ENCODE measurements at regions of chr7 and their contacts with region 1.

Region 1: DNA sequence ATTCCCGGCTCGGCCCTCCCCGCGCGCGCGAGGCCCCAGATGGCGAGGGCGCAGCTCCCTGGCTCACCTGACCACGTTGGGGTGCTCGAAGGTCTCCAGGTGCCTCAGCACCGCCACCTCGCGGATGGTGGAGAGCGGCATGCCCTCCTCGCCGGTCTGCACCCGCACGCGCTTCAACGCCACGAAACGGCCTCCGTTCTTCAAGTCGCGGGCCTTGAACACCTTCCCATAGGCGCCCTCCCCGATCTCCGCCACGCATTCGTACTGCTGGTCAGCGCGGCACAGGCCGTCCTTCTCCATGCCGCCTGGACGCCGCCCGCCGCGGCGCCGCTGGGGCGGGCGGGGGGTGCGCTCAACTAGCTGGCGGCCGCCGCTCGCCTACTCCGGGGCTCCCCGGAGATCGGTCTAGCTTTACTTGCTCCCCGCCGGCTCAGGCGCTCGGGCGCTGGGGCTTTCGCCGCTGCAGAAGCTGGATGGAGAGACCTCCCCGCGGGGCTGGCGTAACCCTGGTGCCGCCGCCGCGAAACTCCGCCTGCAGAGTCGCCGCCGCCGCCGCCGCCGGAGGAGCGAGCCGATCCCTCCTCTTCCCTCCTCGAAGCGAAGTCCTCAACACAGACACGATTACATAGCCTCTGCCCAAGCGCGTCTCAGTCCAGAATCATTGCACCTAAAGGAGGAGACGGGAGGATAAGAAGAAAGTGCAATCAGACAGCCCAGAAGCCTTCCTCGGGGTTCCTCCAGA is 3.2 kb downstream of the CDK6 start:
- DNase-seq: peak; percentile 97
- H3K4me3 Mint-ChIP-seq: peak overlapping the region; percentile 99
- H3K27ac Mint-ChIP-seq: peak overlapping the region; percentile 100
- H3K4me1 Mint-ChIP-seq: peaks cover 40% of the 10 kb centered on the region
- H3K27me3 Mint-ChIP-seq: peaks cover 6% of the 10 kb centered on the region

Region 2: DNA sequence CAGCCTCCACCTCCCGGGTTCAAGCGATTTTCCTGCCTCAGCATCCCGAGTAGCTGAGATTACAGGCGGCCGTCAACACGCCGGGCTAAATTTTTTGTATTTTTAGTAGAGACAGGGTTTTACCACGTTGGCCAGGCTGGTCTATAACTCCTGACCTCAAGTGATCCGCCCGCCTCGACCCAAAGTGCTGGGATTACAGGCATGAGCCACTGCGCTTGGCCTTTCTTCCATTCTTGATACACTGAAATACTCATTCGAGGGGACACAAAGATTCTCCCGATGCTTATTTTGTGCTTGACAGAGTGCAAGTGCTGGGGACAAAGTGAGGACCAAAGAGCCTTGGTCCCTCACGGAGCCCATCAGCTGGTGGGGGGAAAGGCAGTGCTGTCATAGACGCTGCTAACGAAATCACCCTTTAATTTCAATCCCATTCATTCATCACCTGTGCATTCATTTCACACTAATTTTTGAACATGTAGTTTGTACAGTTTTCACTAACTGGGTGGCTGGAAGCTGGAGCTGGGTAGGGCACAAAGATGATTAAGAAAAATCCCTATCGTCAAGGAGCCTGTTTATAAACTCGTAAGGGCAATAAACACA is 242.4 kb before region 1 on chr7:
- intact Hi-C with region 1: loop called (anchors 1 kb)
- DNase-seq: no peak
- H3K4me3 Mint-ChIP-seq: peak overlapping the region; percentile 97
- H3K27ac Mint-ChIP-seq: peak overlapping the region; percentile 30
- H3K4me1 Mint-ChIP-seq: peaks cover 35% of the 10 kb centered on the region
- H3K27me3 Mint-ChIP-seq: no peaks in the 10 kb centered on the region

Region 3: GRCh38 chr7:92691578-92691977 is 141.6 kb before region 1 on chr7:
- intact Hi-C with region 1: loop called (anchors 1 kb)
- DNase-seq: peak; percentile 83
- H3K4me3 Mint-ChIP-seq: peak overlapping the region; percentile 56
- H3K27ac Mint-ChIP-seq: peak overlapping the region; percentile 87
- H3K4me1 Mint-ChIP-seq: peaks cover 68% of the 10 kb centered on the region
- H3K27me3 Mint-ChIP-seq: no peaks in the 10 kb centered on the region

Region 4: DNA sequence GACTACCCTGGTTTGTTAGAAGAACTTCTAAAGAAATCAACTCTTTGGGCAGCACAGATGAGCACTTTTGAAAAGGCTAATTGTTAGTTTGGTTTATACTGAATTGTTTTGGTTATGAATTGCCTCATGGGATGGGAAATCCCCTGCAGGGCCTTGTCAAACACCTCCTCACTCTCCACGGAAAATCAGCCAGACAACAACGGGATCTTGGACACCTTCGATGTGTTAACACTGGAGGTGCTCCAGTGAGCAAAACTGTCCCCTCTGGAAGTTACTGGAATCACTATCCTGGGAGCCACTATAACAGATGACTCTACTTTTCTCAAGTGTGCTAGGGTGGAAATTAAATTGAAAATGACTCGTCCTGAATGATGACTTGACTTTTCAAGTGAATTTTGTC is 35.5 kb before region 1 on chr7:
- intact Hi-C with region 1: loop called (anchors 1 kb)
- DNase-seq: peak; percentile 72
- H3K4me3 Mint-ChIP-seq: no peak overlapping the region
- H3K27ac Mint-ChIP-seq: no peak overlapping the region
- H3K4me1 Mint-ChIP-seq: peaks cover 42% of the 10 kb centered on the region
- H3K27me3 Mint-ChIP-seq: no peaks in the 10 kb centered on the region

Region 5: DNA sequence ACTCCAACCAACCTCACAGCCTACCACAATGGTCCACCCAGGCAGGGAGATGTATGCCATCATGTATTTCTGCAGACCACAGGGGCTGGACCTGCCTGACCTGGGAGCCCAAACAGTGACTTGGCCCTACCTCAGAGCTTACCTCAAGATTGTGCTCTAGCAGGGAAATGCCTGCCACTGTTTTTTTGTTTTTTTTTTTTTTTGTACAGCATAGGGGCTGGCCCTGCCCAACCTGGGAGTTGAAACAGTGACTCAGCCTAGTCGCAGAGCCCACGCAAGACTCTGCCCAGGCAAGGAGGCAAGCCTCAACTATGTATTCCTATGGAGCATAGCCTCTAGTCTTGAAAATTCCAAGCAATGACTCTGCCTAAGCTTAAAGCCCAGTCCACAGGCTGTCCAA is 42.5 kb after region 1 on chr7:
- intact Hi-C with region 1: loop called (anchors 2 kb)
- DNase-seq: peak; percentile 56
- H3K4me3 Mint-ChIP-seq: no peak overlapping the region
- H3K27ac Mint-ChIP-seq: peak overlapping the region; percentile 62
- H3K4me1 Mint-ChIP-seq: peaks cover 39% of the 10 kb centered on the region
- H3K27me3 Mint-ChIP-seq: no peaks in the 10 kb centered on the region

Region 6: GRCh38 chr7:93055543-93056107 is 222.4 kb after region 1 on chr7:
- intact Hi-C with region 1: loop called (anchors 1 kb)
- DNase-seq: peak; percentile 62
- H3K4me3 Mint-ChIP-seq: no peak overlapping the region
- H3K27ac Mint-ChIP-seq: no peak overlapping the region
- H3K4me1 Mint-ChIP-seq: peaks cover 13% of the 10 kb centered on the region
- H3K27me3 Mint-ChIP-seq: peaks cover 6% of the 10 kb centered on the region

Measured in activated CD4-positive, alpha-beta T cell treated with anti-CD3 and anti-CD28 coated beads, Interleukin-2, amount 10 ng/mL, durations not matched to agents 24 days and 14 days (primary cell).